ENCODE measurements at regions of chr4 and their contacts with region 1.

Region 1: DNA sequence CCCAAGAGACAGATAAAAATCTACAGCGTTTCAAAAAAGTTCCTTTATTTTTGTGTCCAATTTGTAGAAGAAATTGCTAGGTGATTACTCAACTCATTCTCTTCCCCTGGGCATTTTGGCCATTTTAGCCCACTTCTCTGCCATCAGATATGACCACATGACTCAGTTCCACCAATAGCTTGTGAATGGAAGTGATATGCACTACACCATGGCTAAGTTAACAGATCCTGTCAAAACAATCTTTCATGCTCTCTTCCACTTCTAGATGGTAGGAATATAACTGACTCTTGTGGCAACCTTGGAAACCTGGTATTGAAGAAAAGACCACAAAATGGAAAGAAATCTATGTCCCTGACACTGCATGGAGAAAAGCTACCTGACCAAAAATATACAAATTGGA is 26.2 kb upstream of the FREM3 start:
- DNase-seq: no peak

Region 2: GRCh38 chr4:143736861-143737260 is 10.1 kb after region 1 on chr4:
- intact Hi-C with region 1: loop called in 1 of 2 experiments (anchors 1 kb)
- DNase-seq: no peak

Measured in posterior vena cava (tissue), 2 donors.